ENCODE measurements at regions of chr20 and their contacts with region 1.

Region 1: DNA sequence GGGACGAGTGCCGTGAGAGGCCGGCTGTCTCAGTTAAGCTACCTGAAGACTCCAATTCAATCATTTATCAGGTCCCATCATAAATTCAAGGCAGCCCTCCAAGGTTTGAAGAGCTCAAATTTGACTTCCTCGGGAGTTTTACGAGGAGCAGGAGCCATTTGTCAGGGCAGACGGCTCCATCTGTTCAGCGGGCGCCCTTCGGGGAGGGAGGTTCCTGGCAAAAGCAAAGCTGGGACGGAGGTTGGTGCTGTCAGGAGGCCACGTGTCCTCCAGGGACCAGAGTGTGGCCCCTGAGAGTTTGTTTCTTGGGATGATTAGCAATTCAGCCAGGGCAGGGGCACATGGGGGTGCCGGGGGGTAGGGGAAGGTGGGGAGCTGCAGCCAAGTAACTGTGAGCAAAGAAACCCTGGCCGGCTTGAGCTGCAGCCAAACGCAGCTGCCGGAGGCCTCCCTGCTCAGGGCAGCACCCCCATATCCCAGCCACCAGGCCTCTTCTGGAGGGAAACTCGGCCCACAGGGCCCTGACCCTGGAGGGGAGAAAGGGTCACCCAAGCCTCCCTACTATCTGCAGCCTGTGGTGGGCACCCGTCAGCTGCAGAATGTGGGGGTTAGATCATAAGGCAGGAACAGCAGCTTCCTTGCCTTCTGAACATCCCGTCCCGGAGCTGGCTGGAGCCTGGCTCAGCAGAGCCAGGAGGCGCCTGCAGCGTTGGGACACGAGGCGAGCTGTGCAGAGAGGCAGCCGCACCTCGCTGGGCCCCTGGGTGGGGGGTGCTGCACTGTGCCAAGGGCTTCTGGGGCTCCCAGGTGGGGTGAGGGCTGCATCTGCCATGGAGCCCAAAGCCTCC is 63.6 kb upstream of the GATA5 start:
- DNase-seq: no peak
- H3K4me3 ChIP-seq: no peak overlapping the region
- H3K27ac ChIP-seq: no peak overlapping the region
- H3K4me1 ChIP-seq: no peaks in the 10 kb centered on the region
- H3K27me3 ChIP-seq: peaks cover 15% of the 10 kb centered on the region
- CTCF ChIP-seq: no peak

Region 2: DNA sequence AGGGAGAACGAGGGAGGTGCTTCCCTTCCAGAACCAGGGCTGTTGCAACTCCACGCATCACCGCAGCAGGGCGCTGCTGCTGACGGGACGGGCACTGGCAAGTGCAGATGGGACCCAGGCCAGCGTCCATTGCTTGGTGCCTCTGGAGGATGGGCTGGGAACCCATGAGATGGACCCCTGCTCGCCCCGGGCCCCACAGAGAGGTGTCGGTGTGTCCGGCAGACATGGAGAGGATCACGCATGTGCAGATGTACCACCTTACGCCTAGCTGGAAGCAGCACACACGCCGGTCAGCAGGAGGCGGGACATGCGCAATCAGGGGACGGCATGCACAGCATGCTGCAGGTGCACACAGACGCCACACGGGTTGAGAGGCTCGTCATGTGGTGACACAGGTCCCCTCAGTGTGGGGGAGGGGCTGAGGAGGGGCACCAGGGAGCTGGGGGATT is 138.1 kb before region 1 on chr20:
- CTCF ChIA-PET with region 1: no interaction called
- dilution Hi-C with region 1: no loop called
- in situ Hi-C with region 1: no loop called
- intact Hi-C with region 1: no loop called
- DNase-seq: no peak
- H3K4me3 ChIP-seq: no peak overlapping the region
- H3K27ac ChIP-seq: no peak overlapping the region
- H3K4me1 ChIP-seq: peaks cover 10% of the 10 kb centered on the region
- H3K27me3 ChIP-seq: no peaks in the 10 kb centered on the region
- CTCF ChIP-seq: peak; percentile 34 to 40

Region 3: GRCh38 chr20:62642040-62642665 is 102.7 kb after region 1 on chr20 and contains the start of gene SLCO4A1:
- CTCF ChIA-PET with region 1: no interaction called
- dilution Hi-C with region 1: loop called (anchors 5 kb)
- in situ Hi-C with region 1: no loop called
- intact Hi-C with region 1: no loop called
- DNase-seq: peak; percentile 39
- H3K4me3 ChIP-seq: peak within 1 kb of the TSS; percentile 7 to 40 (median 34)
- H3K27ac ChIP-seq: no peak within 1 kb of the TSS
- H3K4me1 ChIP-seq: peaks cover 21% of the 10 kb centered on the region
- H3K27me3 ChIP-seq: peaks cover 15% of the 10 kb centered on the region
- CTCF ChIP-seq: no peak
- total RNA-seq, gene SLCO4A1: 0.17 to 0.33 TPM

Region 4: DNA sequence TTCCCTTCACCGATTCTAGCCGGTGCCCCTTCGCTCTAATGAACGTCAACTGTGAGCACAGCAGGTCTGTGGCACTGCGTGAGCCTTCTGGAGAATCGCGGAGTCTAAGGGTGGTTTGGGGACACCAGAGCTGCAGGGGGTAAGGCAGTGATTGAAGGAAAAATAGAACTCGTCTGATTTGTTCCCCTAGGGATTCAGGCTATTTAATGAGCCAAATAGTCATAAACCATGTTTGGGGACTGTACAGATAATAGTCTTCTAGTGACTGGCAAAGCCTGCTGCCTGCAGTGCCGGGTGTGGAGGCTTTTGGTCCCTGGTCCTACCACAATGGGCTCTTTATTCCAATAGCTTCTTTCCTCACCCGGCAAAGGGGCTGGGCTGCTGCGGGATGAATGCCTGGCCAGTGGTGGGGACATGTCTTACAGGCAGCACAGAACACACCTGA is 158.1 kb after region 1 on chr20:
- CTCF ChIA-PET with region 1: no interaction called
- dilution Hi-C with region 1: no loop called
- in situ Hi-C with region 1: no loop called
- intact Hi-C with region 1: no loop called
- DNase-seq: no peak
- H3K4me3 ChIP-seq: no peak overlapping the region
- H3K27ac ChIP-seq: no peak overlapping the region
- H3K4me1 ChIP-seq: no peaks in the 10 kb centered on the region
- H3K27me3 ChIP-seq: no peaks in the 10 kb centered on the region
- CTCF ChIP-seq: no peak